GM12878 (cell line): ENCODE measurements at regions of chr1 and their contacts with region 1.

Region 1: GRCh38 chr1:225777583-225778336 is at the start of gene SRP9:
- DNase-seq: peak; percentile 97
- ATAC-seq: peak; percentile 99
- H3K4me3 ChIP-seq: peak within 1 kb of the TSS; percentile 87
- H3K27ac ChIP-seq: peak within 1 kb of the TSS; percentile 96
- H3K4me1 ChIP-seq: no peaks in the 10 kb centered on the region
- H3K27me3 ChIP-seq: no peaks in the 10 kb centered on the region
- CTCF ChIP-seq: peak; percentile 92 to 98 (median 93)
- EP300 ChIP-seq: no peak; a peak in 1 of 4 replicates
- POLR2A ChIP-seq: peak; percentile 92
- RAD21 ChIP-seq: peak; percentile 49
- polyA plus RNA-seq, gene SRP9: 912 to 1,200 TPM

Region 2: GRCh38 chr1:225845571-225846259 is 68.0 kb after region 1 on chr1:
- CTCF ChIA-PET with region 1: interaction called, 10 read pairs
- POLR2A ChIA-PET with region 1: no interaction called
- RAD21 ChIA-PET with region 1: interaction called, 4 read pairs
- SMC1A ChIA-PET with region 1: interaction called, 8 read pairs
- in situ Hi-C with region 1: no loop called
- intact Hi-C with region 1: loop called (anchors 1 kb)
- DNase-seq: no peak
- ATAC-seq: peak; percentile 36
- H3K4me3 ChIP-seq: no peak overlapping the region
- H3K27ac ChIP-seq: no peak overlapping the region
- H3K4me1 ChIP-seq: peaks cover 34% of the 10 kb centered on the region
- H3K27me3 ChIP-seq: no peaks in the 10 kb centered on the region
- CTCF ChIP-seq: peak; percentile 43 to 59 (median 47)
- EP300 ChIP-seq: no peak
- POLR2A ChIP-seq: peak; percentile 27
- RAD21 ChIP-seq: peak; percentile 68

Region 3: DNA sequence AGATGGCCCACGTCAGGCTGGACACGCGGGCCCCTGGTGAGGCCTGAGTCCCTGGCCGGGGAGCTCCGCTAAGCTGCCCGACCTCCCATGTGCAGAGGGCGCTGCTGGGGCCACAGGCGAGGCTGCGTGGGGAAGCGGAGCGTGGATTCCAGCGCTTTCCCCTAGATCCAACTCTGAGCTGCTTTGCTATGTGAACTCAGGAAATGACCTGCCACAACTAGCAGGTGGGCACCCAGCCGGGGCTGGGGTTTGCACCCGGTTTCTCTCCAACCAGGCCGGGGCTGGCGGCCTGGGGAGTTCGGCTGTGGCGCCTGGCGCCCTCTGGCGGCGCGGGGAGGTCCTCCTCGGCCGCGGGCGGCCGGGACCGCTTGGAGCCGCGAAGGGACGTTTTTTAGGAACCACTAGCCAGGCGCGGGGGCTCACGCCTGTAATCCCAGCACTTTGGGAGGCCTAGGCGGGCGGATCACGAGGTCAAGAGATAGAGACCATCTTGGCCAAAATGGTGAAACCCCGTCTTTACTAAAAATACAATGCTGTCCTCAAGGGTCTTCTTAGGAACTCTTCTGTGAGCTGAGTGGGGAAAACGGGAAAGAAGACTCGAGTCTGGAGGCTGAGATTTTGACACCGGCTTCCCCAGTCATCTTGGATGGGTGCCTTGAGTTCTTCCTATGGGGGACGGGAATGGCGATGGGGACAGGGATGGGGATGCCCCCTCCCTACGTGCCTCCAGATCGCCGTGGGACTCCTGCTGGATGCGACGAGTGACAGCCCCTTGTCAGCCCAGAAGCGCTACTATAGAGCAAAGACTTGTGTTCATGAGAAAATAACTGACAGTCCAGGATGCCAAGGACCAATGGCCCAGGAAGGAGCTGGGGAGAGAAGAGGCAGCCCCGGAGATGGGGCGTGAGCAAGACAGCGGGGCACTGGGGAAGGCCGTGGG is 133.7 kb after region 1 on chr1:
- CTCF ChIA-PET with region 1: interaction called, 19 read pairs
- POLR2A ChIA-PET with region 1: interaction called, 3 read pairs
- RAD21 ChIA-PET with region 1: interaction called, 39 read pairs
- SMC1A ChIA-PET with region 1: interaction called, 11 read pairs
- in situ Hi-C with region 1: loop called (anchors 5 kb)
- intact Hi-C with region 1: no loop called
- DNase-seq: no peak
- ATAC-seq: peak; percentile 97
- H3K4me3 ChIP-seq: no peak overlapping the region
- H3K27ac ChIP-seq: no peak overlapping the region
- H3K4me1 ChIP-seq: peaks cover 4% of the 10 kb centered on the region; the same call in 1 of the 2 replicates
- H3K27me3 ChIP-seq: no peaks in the 10 kb centered on the region
- CTCF ChIP-seq: peak; percentile 78 to 81 (median 78)
- EP300 ChIP-seq: no peak
- POLR2A ChIP-seq: no peak
- RAD21 ChIP-seq: peak; percentile 81

Region 4: DNA sequence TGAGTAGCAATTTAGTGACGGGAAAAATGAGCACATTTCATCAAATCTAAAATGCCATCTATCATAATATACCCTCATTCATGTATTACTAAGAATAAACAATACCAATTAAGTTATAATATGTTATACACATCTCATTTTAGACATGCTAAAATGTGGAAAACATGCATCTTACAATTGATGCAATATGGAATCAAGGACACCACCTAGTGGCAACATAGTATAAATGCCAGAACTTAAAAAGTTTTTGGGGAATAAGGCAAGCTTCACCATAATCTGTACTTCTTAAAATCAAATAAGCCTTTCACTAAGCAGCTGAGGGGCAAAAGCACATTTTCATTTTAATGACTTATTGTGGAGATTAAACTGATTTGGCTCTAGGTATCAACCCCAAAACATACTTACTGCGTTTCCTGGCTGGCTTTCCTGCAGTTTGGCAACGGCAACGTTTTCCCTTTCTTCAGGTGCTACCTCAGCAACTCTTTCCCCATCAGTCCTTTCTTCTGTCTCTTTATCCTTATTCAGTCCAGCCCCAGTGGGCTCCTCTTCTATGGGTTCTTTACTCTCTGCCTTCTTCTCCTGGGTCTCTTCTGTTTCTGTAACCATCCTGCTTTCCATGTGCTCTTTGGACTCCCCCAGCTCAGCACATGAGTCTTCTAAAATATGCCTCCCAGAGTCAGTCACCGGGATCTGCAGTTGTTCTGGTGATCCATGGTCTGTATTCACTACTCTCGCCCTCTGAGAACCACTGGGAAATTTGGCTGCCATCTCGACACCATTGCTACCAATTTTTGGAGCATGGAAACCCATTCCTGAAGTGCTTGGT is 209.9 kb after region 1 on chr1:
- CTCF ChIA-PET with region 1: interaction called, 15 read pairs
- POLR2A ChIA-PET with region 1: interaction called, 3 read pairs
- RAD21 ChIA-PET with region 1: interaction called, 5 read pairs
- SMC1A ChIA-PET with region 1: no interaction called
- in situ Hi-C with region 1: no loop called
- intact Hi-C with region 1: no loop called
- DNase-seq: no peak
- ATAC-seq: peak; percentile 42
- H3K4me3 ChIP-seq: no peak overlapping the region
- H3K27ac ChIP-seq: no peak overlapping the region
- H3K4me1 ChIP-seq: peaks cover 26% of the 10 kb centered on the region
- H3K27me3 ChIP-seq: no peaks in the 10 kb centered on the region
- CTCF ChIP-seq: peak; percentile 62 to 70 (median 63)
- EP300 ChIP-seq: no peak
- POLR2A ChIP-seq: no peak
- RAD21 ChIP-seq: peak; percentile 50